AG04450 (cell line): ENCODE measurements at regions of chrX and their contacts with region 1.

Region 1: DNA sequence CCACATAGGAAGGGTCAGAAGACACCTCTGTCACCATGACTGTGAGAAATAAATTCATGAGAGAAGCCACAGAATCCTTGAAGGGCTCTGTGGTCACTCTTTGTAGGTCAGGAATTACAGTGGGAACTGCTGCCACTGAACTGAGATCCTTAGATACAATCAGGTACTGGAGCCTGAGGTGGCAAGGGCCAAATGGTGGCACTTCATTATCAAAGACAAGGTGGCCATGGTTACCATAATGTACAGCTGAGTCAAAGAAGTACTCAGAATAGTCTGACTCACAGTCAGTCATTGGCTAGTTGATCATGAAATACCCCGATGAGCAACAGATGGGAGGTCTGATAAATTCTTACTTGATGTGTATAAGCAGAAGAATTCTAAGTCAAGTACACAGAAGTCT is 131.9 kb downstream of the RTL3 start:
- DNase-seq: no peak
- H3K4me3 ChIP-seq: no peak overlapping the region
- H3K27ac ChIP-seq: no peak overlapping the region
- H3K27me3 ChIP-seq: no peaks in the 10 kb centered on the region
- CTCF ChIP-seq: no peak

Region 2: DNA sequence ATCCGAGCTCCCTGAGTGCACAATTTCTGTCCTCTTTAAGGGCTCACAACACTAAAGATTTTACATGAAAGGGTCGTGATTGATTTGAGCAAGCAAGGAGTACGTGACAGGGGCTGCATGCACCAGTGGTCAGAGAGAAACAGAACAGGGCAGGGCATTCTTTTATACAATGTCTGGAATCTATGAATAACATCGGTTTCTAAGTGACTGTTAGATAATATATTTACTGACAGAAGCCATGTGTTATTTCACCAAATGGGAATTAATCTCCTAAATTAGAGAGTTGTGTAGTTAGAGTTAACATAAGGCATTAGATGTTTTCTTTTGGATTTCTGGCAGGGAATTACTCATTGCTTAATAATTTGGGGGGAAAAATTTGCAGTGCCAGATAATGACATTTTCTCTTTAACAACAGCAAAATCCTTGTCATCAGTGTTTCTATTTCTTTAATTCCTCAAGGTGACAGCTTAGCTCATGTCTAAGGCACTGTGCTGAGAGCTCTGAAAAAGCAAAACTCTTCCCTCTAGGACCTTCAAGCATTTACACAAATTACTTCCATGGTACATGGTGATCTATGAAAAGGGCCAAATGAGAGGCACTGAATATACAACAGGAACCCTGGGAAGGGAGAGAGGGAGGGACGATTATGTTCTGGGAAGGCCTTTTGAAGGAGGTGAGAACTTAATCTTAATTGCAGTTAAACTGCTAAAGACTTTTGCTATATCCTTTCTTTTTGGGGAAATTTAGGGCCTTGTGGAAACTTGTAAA is 13.1 kb before region 1 on chrX:
- CTCF ChIA-PET with region 1: no interaction called
- POLR2A ChIA-PET with region 1: no interaction called
- DNase-seq: no peak
- H3K4me3 ChIP-seq: no peak overlapping the region
- H3K27ac ChIP-seq: no peak overlapping the region
- H3K27me3 ChIP-seq: no peaks in the 10 kb centered on the region
- CTCF ChIP-seq: no peak

Region 3: DNA sequence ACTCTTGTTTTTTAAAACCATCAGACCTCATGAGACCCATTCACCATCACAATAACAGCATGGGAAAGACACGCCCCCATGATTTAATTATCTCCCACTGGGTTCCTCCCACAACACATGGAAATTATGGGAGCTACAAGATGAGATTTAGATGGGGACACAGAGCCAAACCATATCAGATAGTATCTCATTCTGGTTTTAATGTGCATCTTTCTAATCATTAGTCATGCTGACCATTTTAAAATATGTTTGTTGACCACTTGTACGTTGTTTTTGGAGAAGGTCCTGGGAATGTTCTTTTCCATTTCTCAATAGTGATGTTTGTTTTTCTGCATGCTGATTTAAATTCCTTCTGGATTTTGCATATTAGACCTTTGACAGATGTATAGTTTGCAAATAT is 12.9 kb after region 1 on chrX:
- CTCF ChIA-PET with region 1: no interaction called
- POLR2A ChIA-PET with region 1: no interaction called
- DNase-seq: no peak
- H3K4me3 ChIP-seq: no peak overlapping the region
- H3K27ac ChIP-seq: no peak overlapping the region
- H3K27me3 ChIP-seq: no peaks in the 10 kb centered on the region
- CTCF ChIP-seq: no peak

Region 4: GRCh38 chrX:78555401-78555980 is 28.2 kb after region 1 on chrX:
- CTCF ChIA-PET with region 1: interaction called, 11 read pairs
- POLR2A ChIA-PET with region 1: no interaction called
- DNase-seq: no peak
- H3K4me3 ChIP-seq: no peak overlapping the region
- H3K27ac ChIP-seq: no peak overlapping the region
- H3K27me3 ChIP-seq: no peaks in the 10 kb centered on the region
- CTCF ChIP-seq: peak; percentile 44